ENCODE measurements at regions of chr20 and their contacts with region 1.

Region 1: DNA sequence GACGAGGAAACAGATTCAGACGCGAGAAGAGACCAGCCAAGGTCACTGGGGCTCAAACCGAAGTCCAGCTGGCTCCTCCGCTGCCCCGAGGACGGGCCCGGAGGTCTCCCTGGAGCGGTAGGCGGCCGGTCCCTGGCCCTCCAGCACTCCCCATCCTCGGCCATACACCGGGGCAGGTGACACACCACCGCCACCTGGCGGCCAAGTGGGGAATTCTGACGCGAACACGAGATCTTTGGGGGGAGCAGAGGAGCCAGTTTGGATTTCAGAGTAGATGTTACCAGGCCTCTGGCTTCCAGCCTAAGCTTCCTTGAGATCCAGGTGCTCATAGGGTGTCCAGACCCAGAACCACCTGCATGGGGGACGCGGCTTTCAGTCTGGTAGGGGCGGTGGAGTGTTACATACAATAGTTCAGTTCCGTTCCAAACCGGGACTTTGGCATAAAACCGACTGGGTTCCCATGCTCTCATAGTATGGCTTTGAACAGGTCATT is 16.1 kb downstream of the BPIFB1 start:
- DNase-seq: peak; percentile 57
- H3K4me3 ChIP-seq: no peak overlapping the region
- H3K27ac ChIP-seq: no peak overlapping the region
- H3K4me1 ChIP-seq: peaks cover 0 to 4% (median 1%) of the 10 kb centered on the region in 4 donors
- H3K27me3 ChIP-seq: peaks cover 8% of the 10 kb centered on the region
- CTCF ChIP-seq: peak; percentile 80 to 96 (median 91)
- EP300 ChIP-seq: no peak
- POLR2A ChIP-seq: no peak

Region 2: DNA sequence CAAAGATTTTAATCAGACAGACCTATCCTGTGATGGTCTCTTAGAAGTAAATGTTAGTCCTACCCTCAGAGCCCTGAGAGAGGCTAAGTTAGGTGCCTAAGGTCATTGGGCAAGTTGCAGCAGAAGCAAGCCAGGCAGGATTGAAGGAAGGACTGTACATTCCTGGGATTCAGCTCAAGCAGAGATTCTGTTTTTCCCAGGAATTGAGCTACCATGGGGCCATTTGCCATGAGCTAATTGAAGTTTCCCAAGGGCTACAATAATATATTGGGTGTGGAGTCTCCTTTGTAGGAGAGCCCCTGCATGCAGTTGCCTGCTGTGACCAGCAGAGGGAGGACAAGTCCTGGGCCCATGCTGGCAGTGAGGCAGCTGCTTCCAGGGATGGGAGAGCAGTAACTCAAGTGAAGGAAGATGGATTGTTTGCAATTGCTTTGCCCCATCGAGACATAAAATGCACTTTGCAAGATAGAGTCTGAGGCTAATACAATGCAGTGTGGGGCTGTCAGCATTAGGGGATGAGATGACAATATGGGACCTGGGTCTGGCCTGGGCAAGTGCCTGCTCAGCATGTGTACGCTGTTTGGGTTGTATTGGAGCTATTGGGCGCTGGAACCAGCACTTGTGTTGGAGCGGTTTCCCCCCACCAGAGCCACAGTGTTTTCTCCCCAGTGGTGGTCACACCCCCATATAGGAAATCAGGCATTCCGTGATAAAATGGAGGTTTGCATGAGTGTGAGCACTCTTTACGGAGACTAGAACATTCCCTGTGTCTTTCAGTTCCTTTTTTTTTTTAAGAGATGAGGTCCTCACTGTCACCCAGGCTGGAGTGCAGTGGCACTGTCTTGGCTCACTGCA is 509.0 kb before region 1 on chr20:
- in situ Hi-C with region 1: no loop called
- intact Hi-C with region 1: loop called (anchors 5 kb)
- DNase-seq: peak; percentile 76
- H3K4me3 ChIP-seq: no peak overlapping the region
- H3K27ac ChIP-seq: no peak overlapping the region
- H3K4me1 ChIP-seq: no peaks in the 10 kb centered on the region
- H3K27me3 ChIP-seq: no peaks in the 10 kb centered on the region
- CTCF ChIP-seq: peak; percentile 92 to 99 (median 99)
- EP300 ChIP-seq: no peak
- POLR2A ChIP-seq: no peak

Region 3: GRCh38 chr20:32894026-32894483 is 405.1 kb before region 1 on chr20:
- in situ Hi-C with region 1: loop called in 1 of 4 experiments (anchors 10 kb)
- intact Hi-C with region 1: no loop called
- DNase-seq: no peak
- H3K4me3 ChIP-seq: no peak overlapping the region
- H3K27ac ChIP-seq: no peak overlapping the region
- H3K4me1 ChIP-seq: no peaks in the 10 kb centered on the region
- H3K27me3 ChIP-seq: no peaks in the 10 kb centered on the region
- CTCF ChIP-seq: peak in 3 of 5 experiments; percentile 14 to 17 (median 16)
- EP300 ChIP-seq: no peak
- POLR2A ChIP-seq: no peak

Region 4: DNA sequence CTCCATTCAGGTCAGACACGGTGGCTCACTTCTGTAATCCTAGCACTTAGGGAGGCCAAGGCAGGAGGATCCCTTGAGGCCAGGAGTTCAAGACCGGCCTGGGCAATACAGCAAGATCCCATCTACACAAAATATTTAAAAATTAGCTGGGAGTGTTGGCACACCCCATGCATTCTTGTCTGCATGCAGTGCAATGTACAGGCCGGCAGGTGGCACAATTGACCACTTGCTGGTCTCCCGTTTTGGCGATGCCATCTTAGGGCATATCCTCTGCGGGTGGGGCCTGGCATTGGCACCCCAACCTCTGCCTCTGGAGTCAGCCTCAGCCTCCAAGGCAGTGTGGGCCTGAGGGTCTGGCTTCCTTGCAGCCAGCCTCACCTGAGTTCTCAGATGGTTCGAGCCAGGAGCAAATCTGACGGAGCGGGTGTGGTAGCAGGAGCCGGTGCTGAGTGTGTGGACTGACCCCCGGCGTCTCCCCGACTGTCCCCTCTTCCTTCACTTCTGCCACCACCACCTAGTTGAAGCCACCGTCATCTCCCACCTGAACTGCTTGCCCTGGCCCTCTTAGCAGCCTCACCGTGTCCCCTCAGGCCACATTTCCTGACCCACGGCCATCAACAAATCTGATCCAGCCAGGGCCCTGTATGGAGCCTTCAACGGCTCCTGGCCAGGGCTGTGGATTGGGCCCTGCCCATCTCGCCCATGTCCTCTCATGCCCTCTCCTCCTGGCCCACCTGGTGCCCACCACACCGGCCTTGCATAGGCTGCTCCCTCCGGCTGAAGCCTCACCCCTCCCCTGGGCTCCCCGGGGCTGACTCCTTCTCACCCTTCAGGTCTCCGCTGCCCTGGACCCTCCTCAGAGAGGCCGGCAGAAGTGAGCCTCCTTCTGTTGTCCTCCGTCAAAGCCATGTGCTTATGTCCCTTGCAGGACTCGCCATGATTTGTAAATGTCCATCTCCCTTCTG is 396.4 kb before region 1 on chr20:
- in situ Hi-C with region 1: loop called (anchors 5 to 25 kb)
- intact Hi-C with region 1: loop called (anchors 5 kb)
- DNase-seq: peak; percentile 44
- H3K4me3 ChIP-seq: no peak overlapping the region
- H3K27ac ChIP-seq: no peak overlapping the region
- H3K4me1 ChIP-seq: no peaks in the 10 kb centered on the region
- H3K27me3 ChIP-seq: no peaks in the 10 kb centered on the region
- CTCF ChIP-seq: peak; percentile 81 to 92 (median 88)
- EP300 ChIP-seq: no peak
- POLR2A ChIP-seq: no peak

Region 5: GRCh38 chr20:33262658-33263065 is 36.5 kb before region 1 on chr20:
- in situ Hi-C with region 1: no loop called
- intact Hi-C with region 1: no loop called
- DNase-seq: no peak
- H3K4me3 ChIP-seq: no peak overlapping the region
- H3K27ac ChIP-seq: no peak overlapping the region
- H3K4me1 ChIP-seq: no peaks in the 10 kb centered on the region
- H3K27me3 ChIP-seq: peaks cover 10% of the 10 kb centered on the region
- CTCF ChIP-seq: peak in 3 of 5 experiments; percentile 16 to 35 (median 20)
- EP300 ChIP-seq: no peak
- POLR2A ChIP-seq: no peak